ENCODE measurements at regions of chr19 and their contacts with region 1.

Region 1: GRCh38 chr19:40750059-40750873 is at the start of gene ACTMAP:
- DNase-seq: peak; percentile 99
- ATAC-seq: peak; percentile 88
- H3K4me3 ChIP-seq: peak within 1 kb of the TSS; percentile 94
- H3K27ac ChIP-seq: peak within 1 kb of the TSS; percentile 98
- H3K4me1 ChIP-seq: peaks cover 16% of the 10 kb centered on the region
- H3K27me3 ChIP-seq: no peaks in the 10 kb centered on the region
- CTCF ChIP-seq: no peak
- EP300 ChIP-seq: peak in 1 of 2 experiments; percentile 55; a peak in 1 of 4 replicates
- POLR2A ChIP-seq: peak; percentile 57; the same call in 1 of the 2 replicates
- RAD21 ChIP-seq: no peak
- polyA plus RNA-seq, gene ACTMAP: 4.7 to 8.2 TPM

Region 2: GRCh38 chr19:39480337-39481228 is 1269.7 kb before region 1 on chr19 and contains the start of gene TIMM50:
- CTCF ChIA-PET with region 1: no interaction called
- POLR2A ChIA-PET with region 1: interaction called, 10 read pairs
- RAD21 ChIA-PET with region 1: no interaction called
- SMC1A ChIA-PET with region 1: no interaction called
- in situ Hi-C with region 1: no loop called
- intact Hi-C with region 1: no loop called
- DNase-seq: peak; percentile 69
- ATAC-seq: peak; percentile 97
- H3K4me3 ChIP-seq: peak within 1 kb of the TSS; percentile 87
- H3K27ac ChIP-seq: peak within 1 kb of the TSS; percentile 91
- H3K4me1 ChIP-seq: peaks cover 6% of the 10 kb centered on the region
- H3K27me3 ChIP-seq: no peaks in the 10 kb centered on the region
- CTCF ChIP-seq: no peak
- EP300 ChIP-seq: no peak
- POLR2A ChIP-seq: peak; percentile 95
- RAD21 ChIP-seq: no peak
- polyA plus RNA-seq, gene TIMM50: 15.6 to 34.7 TPM

Region 3: DNA sequence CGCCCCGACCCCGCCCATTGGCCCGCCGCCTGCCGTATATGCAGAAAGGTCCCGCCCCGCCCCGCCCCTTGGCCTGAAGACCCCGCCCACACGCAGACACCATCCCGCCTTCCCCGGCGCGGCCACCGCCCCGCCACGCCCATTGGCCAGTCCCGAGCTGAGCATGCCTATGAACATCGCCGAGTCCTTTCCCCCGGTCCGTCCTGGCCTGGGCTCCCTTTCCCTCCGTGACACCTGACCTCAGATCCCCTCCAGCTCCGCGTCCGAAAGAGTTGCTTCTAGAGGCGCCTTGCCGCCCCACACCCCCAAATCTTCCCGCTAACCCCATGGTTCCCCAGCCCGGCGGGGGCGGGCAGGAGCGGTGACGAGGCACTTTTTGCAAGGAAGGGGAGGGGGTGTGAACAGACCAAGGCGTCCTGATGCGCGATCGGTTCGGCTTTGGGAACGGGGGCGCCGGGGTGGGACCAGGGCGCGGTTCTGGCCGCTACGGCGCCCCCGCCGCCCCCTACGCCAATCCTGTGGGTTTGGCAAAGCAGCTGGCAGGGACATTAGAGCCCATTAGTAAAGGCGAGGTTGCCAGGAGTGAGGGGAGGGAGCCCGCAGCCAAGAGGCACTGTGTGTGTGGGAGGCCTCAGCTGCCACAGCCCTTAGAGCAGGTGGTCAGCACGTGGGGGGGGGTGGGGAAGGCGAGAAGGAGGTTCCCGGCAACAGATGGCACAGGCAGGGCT is 59.4 kb before region 1 on chr19:
- CTCF ChIA-PET with region 1: no interaction called
- POLR2A ChIA-PET with region 1: interaction called, 10 read pairs
- RAD21 ChIA-PET with region 1: interaction called, 4 read pairs
- SMC1A ChIA-PET with region 1: no interaction called
- in situ Hi-C with region 1: no loop called
- intact Hi-C with region 1: no loop called
- DNase-seq: peak; percentile 53
- ATAC-seq: peak; percentile 91
- H3K4me3 ChIP-seq: peak overlapping the region; percentile 92
- H3K27ac ChIP-seq: peak overlapping the region; percentile 72
- H3K4me1 ChIP-seq: peaks cover 26% of the 10 kb centered on the region
- H3K27me3 ChIP-seq: no peaks in the 10 kb centered on the region
- CTCF ChIP-seq: no peak
- EP300 ChIP-seq: no peak
- POLR2A ChIP-seq: peak; percentile 81
- RAD21 ChIP-seq: no peak

Region 4: GRCh38 chr19:40716655-40717324 is 33.5 kb before region 1 on chr19 and contains the starts of genes COQ8B and ITPKC:
- CTCF ChIA-PET with region 1: interaction called, 5 read pairs
- POLR2A ChIA-PET with region 1: interaction called, 37 read pairs
- RAD21 ChIA-PET with region 1: interaction called, 28 read pairs
- SMC1A ChIA-PET with region 1: interaction called, 13 read pairs
- in situ Hi-C with region 1: no loop called
- intact Hi-C with region 1: loop called (anchors 2 kb)
- DNase-seq: peak; percentile 88
- ATAC-seq: peak; percentile 72
- H3K4me3 ChIP-seq: peak within 1 kb of the TSS; percentile 79
- H3K27ac ChIP-seq: peak within 1 kb of the TSS; percentile 94
- H3K4me1 ChIP-seq: peaks cover 18% of the 10 kb centered on the region
- H3K27me3 ChIP-seq: no peaks in the 10 kb centered on the region
- CTCF ChIP-seq: no peak
- EP300 ChIP-seq: peak in 1 of 2 experiments; percentile 64; a peak in 2 of 4 replicates
- POLR2A ChIP-seq: peak; percentile 73
- RAD21 ChIP-seq: no peak
- polyA plus RNA-seq, gene COQ8B: 0.39 to 0.57 TPM
- polyA plus RNA-seq, gene ITPKC: 0.03 to 0.26 TPM

Region 5: DNA sequence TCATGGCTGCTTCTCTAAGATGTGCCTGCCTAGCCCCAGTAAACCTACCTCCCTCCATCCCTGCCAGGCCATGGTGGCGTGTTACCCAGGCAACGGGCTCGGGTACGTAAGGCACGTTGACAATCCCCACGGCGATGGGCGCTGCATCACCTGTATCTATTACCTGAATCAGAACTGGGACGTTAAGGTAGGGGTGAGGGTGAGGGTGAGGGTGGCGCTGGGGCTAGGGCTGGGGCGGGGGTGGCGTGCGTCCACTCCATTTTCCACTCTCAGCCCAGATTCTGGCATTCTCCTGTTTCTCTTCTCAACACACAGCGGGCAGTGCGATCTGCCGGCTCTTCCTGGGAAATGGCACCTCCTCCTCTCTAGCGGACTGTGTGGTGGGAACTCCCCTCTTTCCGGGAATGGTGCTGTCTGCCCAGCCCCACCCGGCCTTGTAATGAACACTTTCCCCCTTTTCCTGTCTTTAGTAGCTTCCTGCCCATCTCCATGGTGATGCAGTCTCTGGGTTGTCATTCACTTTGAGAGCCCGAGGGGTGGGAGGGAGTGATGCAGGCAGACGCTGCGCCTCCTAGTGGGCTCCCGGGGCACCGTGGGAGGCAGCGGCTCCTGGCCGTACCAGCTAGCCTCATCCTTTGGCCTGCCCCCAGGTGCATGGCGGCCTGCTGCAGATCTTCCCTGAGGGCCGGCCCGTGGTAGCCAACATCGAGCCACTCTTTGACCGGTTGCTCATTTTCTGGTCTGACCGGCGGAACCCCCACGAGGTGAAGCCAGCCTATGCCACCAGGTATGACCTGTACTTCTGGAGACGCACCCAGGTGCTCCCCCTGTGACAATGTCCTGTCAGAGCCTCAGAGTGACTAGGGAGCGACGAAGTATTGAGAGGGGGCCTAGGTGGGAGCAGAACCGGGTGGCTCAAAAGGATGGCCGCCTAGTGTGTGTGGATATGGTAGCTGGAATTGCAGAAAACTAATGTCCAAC is 56.5 kb after region 1 on chr19:
- CTCF ChIA-PET with region 1: interaction called, 26 read pairs
- POLR2A ChIA-PET with region 1: interaction called, 18 read pairs
- RAD21 ChIA-PET with region 1: interaction called, 10 read pairs
- SMC1A ChIA-PET with region 1: interaction called, 41 read pairs
- in situ Hi-C with region 1: no loop called
- intact Hi-C with region 1: no loop called
- DNase-seq: no peak
- ATAC-seq: peak; percentile 77
- H3K4me3 ChIP-seq: no peak overlapping the region
- H3K27ac ChIP-seq: no peak overlapping the region
- H3K4me1 ChIP-seq: peaks cover 40% of the 10 kb centered on the region
- H3K27me3 ChIP-seq: no peaks in the 10 kb centered on the region
- CTCF ChIP-seq: peak; percentile 80 to 95 (median 87)
- EP300 ChIP-seq: no peak
- POLR2A ChIP-seq: peak; percentile 52
- RAD21 ChIP-seq: peak; percentile 53

Measured in GM12878 (cell line).